Activated B cell treated with CpG ODN at 0.5 μM for 24 hours (primary cell): ENCODE measurements at regions of chr1 and their contacts with region 1.

Region 1: DNA sequence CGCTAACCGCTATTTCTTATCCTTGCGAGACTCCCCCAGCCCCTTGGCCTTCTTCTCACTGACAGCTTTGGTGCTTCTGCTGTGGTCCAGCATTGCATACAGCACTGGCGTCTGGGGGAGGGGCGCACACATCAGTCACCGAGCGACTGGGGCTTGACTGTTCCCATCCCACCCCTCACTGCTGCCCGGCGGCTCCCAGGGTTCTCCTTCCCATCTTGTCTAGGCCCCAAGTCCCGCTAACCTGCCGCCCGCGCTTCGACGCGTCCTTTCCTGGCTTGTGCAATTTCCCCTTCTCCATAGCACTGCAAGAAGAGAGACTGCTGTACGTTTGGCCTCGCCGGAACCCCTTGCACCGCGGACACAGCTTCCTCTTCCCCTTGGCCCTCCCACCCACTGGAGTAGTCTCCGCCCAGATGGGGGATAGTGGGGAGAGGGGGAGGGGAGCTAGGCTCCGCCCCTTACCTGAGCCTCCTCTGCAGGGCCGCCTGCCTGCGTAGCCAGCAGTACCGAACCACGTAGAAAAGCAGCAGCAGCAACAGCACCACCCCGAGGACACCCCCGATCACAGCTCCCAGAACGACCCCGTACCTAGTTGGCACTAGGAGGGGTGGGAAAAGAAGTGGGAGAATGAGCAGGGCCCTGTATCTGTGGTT is 3.8 kb downstream of the MPZ start:
- DNase-seq: peak; percentile 78
- ATAC-seq: peak; percentile 94
- H3K4me3 Mint-ChIP-seq: peak overlapping the region; percentile 99
- H3K27ac Mint-ChIP-seq: peak overlapping the region; percentile 93
- H3K4me1 Mint-ChIP-seq: peaks cover 44% of the 10 kb centered on the region
- H3K27me3 Mint-ChIP-seq: no peaks in the 10 kb centered on the region
- CTCF ChIP-seq: no peak

Region 2: DNA sequence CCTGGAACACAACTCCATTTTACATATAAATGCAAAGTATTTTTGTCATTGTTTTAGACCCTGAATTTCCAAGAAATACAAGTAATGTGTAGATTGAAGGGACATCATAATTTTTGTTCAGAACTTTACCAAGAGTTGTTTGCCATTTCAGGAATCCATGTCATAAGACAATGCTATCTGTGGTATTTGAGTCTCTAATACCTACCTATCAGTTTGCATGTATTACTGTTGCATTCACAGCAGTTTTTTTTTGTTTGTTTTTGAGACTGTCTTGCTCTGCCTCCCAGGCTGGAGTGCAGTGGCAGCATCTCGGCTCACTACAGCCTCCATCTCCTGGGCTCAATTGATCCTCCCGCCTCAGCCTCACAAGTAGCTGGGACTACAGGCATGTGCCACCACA is 13.4 kb before region 1 on chr1:
- CTCF ChIA-PET with region 1: interaction called, 11 read pairs
- POLR2A ChIA-PET with region 1: interaction called, 7 read pairs
- intact Hi-C with region 1: no loop called
- DNase-seq: no peak
- ATAC-seq: no peak
- H3K4me3 Mint-ChIP-seq: no peak overlapping the region
- H3K27ac Mint-ChIP-seq: no peak overlapping the region
- H3K4me1 Mint-ChIP-seq: peaks cover 6% of the 10 kb centered on the region
- H3K27me3 Mint-ChIP-seq: no peaks in the 10 kb centered on the region
- CTCF ChIP-seq: no peak

Region 3: DNA sequence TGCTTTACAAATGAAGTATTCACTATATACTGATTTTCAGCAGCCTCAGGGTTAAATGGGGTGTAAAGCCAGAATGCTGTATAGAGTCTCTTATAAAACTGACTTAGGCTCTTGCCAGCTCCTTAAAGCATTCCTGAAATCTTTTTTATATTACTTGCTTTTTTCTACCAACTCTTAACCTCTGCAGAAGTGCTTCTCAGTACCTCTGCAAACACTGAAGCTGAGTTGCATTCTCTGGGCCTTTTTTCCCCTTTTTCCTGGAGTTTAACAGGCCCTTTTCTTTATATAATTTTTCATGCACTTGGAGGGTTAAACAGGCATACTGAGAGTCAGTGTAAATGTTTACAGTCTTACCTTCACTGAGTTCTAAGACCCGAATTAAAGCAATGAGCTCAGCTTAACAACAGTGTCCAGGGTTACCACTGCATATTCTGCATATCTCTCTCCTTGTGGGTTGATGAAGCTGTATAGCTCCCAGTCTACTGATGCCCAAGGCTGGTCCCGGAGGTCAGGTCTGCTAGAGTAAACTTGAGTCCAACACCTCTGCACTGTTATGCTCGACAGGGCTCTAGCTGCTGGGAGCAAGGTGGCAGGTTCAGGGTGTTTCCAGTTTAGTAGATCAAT is 102.5 kb after region 1 on chr1:
- CTCF ChIA-PET with region 1: no interaction called
- POLR2A ChIA-PET with region 1: no interaction called
- intact Hi-C with region 1: no loop called
- DNase-seq: no peak
- ATAC-seq: no peak
- H3K4me3 Mint-ChIP-seq: no peak overlapping the region
- H3K27ac Mint-ChIP-seq: no peak overlapping the region
- H3K4me1 Mint-ChIP-seq: peaks cover 14% of the 10 kb centered on the region
- H3K27me3 Mint-ChIP-seq: no peaks in the 10 kb centered on the region
- CTCF ChIP-seq: no peak